ENCODE measurements at regions of chr5 and their contacts with region 1.

Region 1: DNA sequence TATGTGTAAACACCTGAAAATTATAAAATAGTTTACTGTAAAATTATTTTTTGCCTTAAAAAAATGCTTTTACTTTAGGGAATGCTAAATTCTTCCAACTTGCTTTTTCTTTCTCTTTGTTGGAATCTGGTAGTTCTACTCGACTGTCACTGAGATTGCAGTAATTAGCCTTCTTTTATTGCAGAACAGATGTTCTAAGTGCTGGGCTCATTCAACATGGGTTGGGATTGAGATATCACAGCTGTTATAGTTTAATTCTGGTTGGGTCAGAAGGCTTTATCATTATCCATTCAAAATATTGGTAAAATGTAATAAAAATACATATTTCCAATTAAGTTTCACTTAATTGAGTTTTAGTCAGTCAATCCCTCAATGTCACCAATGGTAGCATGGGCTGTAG is 686.7 kb downstream of the CDH18 start:
- DNase-seq: no peak
- H3K4me3 ChIP-seq: no peak overlapping the region
- H3K27ac ChIP-seq: no peak overlapping the region
- H3K4me1 ChIP-seq: no peaks in the 10 kb centered on the region
- H3K27me3 ChIP-seq: no peaks in the 10 kb centered on the region
- CTCF ChIP-seq: no peak

Region 2: DNA sequence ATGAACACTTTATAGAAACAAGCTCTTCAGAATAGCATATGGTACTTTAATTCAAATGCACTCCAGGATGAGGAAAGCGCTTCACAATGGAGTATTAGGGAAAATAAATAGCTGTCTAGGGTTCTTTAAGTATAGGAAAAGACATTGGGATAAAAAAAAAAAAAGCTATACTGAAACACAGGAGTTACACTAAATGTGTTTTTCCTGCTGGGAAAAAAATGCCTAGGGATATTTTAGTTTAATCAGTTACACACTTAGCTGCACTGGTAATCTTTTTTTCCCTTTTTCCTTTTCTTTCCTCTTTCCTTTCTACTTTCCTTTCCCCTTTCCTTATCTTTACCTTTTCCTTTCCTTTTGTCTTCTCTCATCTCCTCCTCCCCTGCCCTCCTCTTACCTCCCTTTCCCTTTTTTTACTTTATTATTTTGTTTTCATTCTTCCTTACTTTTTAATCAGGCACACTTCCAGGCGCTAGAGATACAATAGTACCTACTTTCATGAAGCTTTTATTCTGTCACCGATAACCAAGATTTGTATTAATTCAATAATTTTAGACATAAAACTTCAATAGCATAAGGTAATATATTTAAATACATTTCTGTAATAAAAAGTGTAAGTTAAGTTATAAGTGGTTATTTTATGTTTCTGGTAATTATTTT is 72.0 kb before region 1 on chr5:
- intact Hi-C with region 1: no loop called
- DNase-seq: no peak
- H3K4me3 ChIP-seq: no peak overlapping the region
- H3K27ac ChIP-seq: no peak overlapping the region
- H3K4me1 ChIP-seq: no peaks in the 10 kb centered on the region
- H3K27me3 ChIP-seq: no peaks in the 10 kb centered on the region
- CTCF ChIP-seq: no peak

Region 3: GRCh38 chr5:19285286-19285685 is 16.0 kb before region 1 on chr5:
- intact Hi-C with region 1: loop called (anchors 1 kb)
- DNase-seq: no peak
- H3K4me3 ChIP-seq: no peak overlapping the region
- H3K27ac ChIP-seq: no peak overlapping the region
- H3K4me1 ChIP-seq: no peaks in the 10 kb centered on the region
- H3K27me3 ChIP-seq: no peaks in the 10 kb centered on the region
- CTCF ChIP-seq: no peak